ENCODE measurements at regions of chr1 and their contacts with region 1.

Region 1: GRCh38 chr1:211698161-211699026 is 23.0 kb upstream of the NEK2 start:
- DNase-seq: peak; percentile 55
- ATAC-seq: peak; percentile 78
- H3K4me3 ChIP-seq: 0 out of 2 replicates have a peak overlapping the region, but pooled peaks have one; percentile 31
- H3K27ac ChIP-seq: no peak overlapping the region
- H3K4me1 ChIP-seq: peaks cover 40% of the 10 kb centered on the region
- H3K27me3 ChIP-seq: no peaks in the 10 kb centered on the region
- CTCF ChIP-seq: peak; percentile 98 to 99 (median 99); a peak in 5 of 6 replicates
- EP300 ChIP-seq: no peak
- POLR2A ChIP-seq: no peak
- RAD21 ChIP-seq: peak; percentile 93

Region 2: GRCh38 chr1:211484755-211485479 is 213.5 kb before region 1 on chr1:
- CTCF ChIA-PET with region 1: no interaction called
- POLR2A ChIA-PET with region 1: no interaction called
- RAD21 ChIA-PET with region 1: no interaction called
- SMC1A ChIA-PET with region 1: no interaction called
- in situ Hi-C with region 1: no loop called
- intact Hi-C with region 1: no loop called
- DNase-seq: no peak
- ATAC-seq: no peak; the same call in 2 of the 3 replicates
- H3K4me3 ChIP-seq: no peak overlapping the region
- H3K27ac ChIP-seq: no peak overlapping the region
- H3K4me1 ChIP-seq: no peaks in the 10 kb centered on the region
- H3K27me3 ChIP-seq: peaks cover 2 to 3% of the 10 kb centered on the region in 2 experiments; a peak in 1 of 4 replicates
- CTCF ChIP-seq: no peak
- EP300 ChIP-seq: no peak
- POLR2A ChIP-seq: no peak
- RAD21 ChIP-seq: no peak

Region 3: DNA sequence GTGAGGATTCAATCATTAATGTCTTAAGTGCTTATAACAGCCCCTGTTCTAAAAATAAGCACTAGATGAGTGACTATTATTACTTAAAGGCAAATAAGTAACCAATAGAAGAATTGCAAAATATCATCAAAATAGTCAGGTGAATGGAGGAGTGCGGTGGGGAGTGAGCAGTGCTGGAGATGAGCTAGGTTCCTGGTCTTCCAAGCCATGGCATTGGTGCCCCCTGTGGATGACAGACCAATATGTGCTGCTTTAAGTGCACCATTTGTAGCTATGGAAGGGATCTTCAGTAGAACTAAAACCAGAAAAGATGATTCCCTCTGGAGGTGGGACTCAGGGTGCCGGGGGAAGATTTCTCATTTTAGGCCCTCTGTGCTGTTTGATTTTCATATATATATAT is 73.4 kb before region 1 on chr1:
- CTCF ChIA-PET with region 1: no interaction called
- POLR2A ChIA-PET with region 1: no interaction called
- RAD21 ChIA-PET with region 1: no interaction called
- SMC1A ChIA-PET with region 1: no interaction called
- in situ Hi-C with region 1: no loop called
- intact Hi-C with region 1: no loop called
- DNase-seq: no peak
- ATAC-seq: peak; percentile 85
- H3K4me3 ChIP-seq: no peak overlapping the region
- H3K27ac ChIP-seq: no peak overlapping the region
- H3K4me1 ChIP-seq: no peaks in the 10 kb centered on the region
- H3K27me3 ChIP-seq: no peaks in the 10 kb centered on the region
- CTCF ChIP-seq: peak; percentile 30 to 60 (median 35); a peak in 4 of 6 replicates
- EP300 ChIP-seq: no peak
- POLR2A ChIP-seq: no peak
- RAD21 ChIP-seq: peak; percentile 42

Region 4: DNA sequence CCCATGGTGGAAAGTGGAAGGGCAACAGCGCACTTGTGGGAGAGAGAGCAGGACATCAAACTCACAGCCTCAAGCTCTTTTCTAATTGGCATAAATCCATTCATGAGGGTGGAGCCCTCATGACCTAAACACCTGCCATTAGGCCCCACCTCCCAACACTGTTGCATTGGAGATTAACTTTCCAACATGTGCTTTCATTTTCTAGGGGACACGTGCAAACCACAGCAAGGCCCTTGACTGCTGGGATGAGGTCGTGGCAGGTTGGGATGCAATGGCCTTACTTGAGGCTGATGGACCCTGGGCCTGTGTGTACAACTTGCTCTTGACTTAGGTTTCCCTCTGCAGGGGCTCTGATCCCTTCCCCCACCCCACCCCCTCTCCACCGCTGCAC is 12.9 kb after region 1 on chr1:
- CTCF ChIA-PET with region 1: interaction called, 7 read pairs
- POLR2A ChIA-PET with region 1: interaction called, 6 read pairs
- RAD21 ChIA-PET with region 1: no interaction called
- SMC1A ChIA-PET with region 1: interaction called, 10 read pairs
- in situ Hi-C with region 1: no loop called
- intact Hi-C with region 1: no loop called
- DNase-seq: no peak
- ATAC-seq: no peak
- H3K4me3 ChIP-seq: no peak overlapping the region
- H3K27ac ChIP-seq: no peak overlapping the region
- H3K4me1 ChIP-seq: no peaks in the 10 kb centered on the region
- H3K27me3 ChIP-seq: no peaks in the 10 kb centered on the region
- CTCF ChIP-seq: no peak
- EP300 ChIP-seq: no peak
- POLR2A ChIP-seq: no peak
- RAD21 ChIP-seq: no peak

Region 5: DNA sequence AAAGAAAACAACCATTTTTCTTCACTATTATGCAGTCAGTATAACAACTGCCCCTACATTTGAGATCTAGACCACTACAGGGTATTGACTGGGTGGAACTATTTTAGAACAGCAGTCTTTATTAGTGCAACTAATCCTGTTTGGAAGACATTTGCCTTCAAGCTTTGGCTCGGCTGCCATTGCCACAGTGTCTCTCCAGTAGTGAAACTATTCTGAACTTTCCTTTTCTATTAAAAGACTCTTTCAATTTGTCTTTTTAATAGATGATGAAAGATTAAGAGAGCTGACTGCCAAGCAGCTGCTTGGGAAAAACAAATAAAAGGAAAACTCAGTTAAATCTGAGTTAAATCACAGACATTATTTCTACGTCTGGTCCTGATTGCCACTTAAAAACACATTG is 82.9 kb after region 1 on chr1:
- CTCF ChIA-PET with region 1: interaction called, 10 read pairs
- POLR2A ChIA-PET with region 1: no interaction called
- RAD21 ChIA-PET with region 1: interaction called, 14 read pairs
- SMC1A ChIA-PET with region 1: interaction called, 19 read pairs
- in situ Hi-C with region 1: no loop called
- intact Hi-C with region 1: no loop called
- DNase-seq: no peak
- ATAC-seq: peak; percentile 67
- H3K4me3 ChIP-seq: no peak overlapping the region
- H3K27ac ChIP-seq: peak overlapping the region; percentile 33; the same call in 1 of the 2 replicates
- H3K4me1 ChIP-seq: no peaks in the 10 kb centered on the region; the same call in none of the 2 replicates
- H3K27me3 ChIP-seq: no peaks in the 10 kb centered on the region
- CTCF ChIP-seq: no peak
- EP300 ChIP-seq: no peak
- POLR2A ChIP-seq: no peak
- RAD21 ChIP-seq: no peak

Region 6: DNA sequence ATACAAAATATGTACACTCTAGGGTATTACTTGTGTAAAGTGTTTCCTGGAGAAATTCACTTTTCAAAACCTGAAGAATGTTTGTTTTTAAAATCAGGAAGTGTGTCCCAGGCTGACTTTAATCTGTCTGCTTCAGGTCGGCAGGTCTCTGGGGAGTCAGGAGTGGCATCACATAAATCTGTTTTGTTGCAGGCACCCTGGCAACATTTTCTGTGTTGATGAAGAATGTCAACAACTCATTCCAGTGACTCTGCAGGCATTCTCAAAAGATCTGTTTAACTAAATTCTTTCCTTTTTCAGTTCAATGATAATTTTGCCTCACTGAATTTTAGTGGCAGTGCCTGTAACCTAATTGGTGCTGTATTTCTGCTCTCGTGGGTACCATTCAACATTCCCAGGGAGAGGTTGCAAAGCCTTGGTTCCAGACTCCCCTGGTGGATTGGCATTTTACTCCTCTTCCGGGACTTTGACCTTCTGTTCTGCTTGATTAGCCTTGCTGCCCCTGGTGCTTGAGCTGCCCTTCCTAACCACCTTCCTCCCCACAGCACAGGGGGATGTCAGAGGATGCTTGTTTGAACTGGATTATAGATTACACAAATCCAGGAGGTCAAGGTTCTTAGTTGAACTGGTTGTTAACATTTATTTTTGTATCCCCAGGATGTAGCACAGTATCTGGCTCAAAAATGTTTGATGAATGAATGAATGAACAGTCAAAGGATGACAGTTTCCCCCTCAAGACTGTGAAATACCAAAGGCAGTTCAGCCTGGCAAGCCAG is 187.5 kb after region 1 on chr1:
- CTCF ChIA-PET with region 1: interaction called, 3 read pairs
- POLR2A ChIA-PET with region 1: no interaction called
- RAD21 ChIA-PET with region 1: interaction called, 3 read pairs
- SMC1A ChIA-PET with region 1: interaction called, 12 read pairs
- in situ Hi-C with region 1: no loop called
- intact Hi-C with region 1: no loop called
- DNase-seq: no peak
- ATAC-seq: 0 out of 3 replicates have a peak, but pooled peaks have one; percentile 15
- H3K4me3 ChIP-seq: no peak overlapping the region
- H3K27ac ChIP-seq: no peak overlapping the region
- H3K4me1 ChIP-seq: peaks cover 10% of the 10 kb centered on the region; the same call in 1 of the 2 replicates
- H3K27me3 ChIP-seq: no peaks in the 10 kb centered on the region
- CTCF ChIP-seq: no peak
- EP300 ChIP-seq: no peak
- POLR2A ChIP-seq: no peak
- RAD21 ChIP-seq: no peak

Region 7: GRCh38 chr1:211991695-211992094 is 293.3 kb after region 1 on chr1:
- CTCF ChIA-PET with region 1: interaction called, 32 read pairs
- POLR2A ChIA-PET with region 1: interaction called, 38 read pairs
- RAD21 ChIA-PET with region 1: interaction called, 42 read pairs
- SMC1A ChIA-PET with region 1: interaction called, 53 read pairs
- in situ Hi-C with region 1: no loop called
- intact Hi-C with region 1: loop called (anchors 5 kb)
- DNase-seq: no peak
- ATAC-seq: no peak
- H3K4me3 ChIP-seq: no peak overlapping the region
- H3K27ac ChIP-seq: no peak overlapping the region
- H3K4me1 ChIP-seq: peaks cover 2% of the 10 kb centered on the region
- H3K27me3 ChIP-seq: no peaks in the 10 kb centered on the region
- CTCF ChIP-seq: no peak
- EP300 ChIP-seq: no peak
- POLR2A ChIP-seq: no peak
- RAD21 ChIP-seq: no peak

Region 8: GRCh38 chr1:212070720-212071302 is 372.4 kb after region 1 on chr1:
- CTCF ChIA-PET with region 1: interaction called, 8 read pairs
- POLR2A ChIA-PET with region 1: no interaction called
- RAD21 ChIA-PET with region 1: interaction called, 23 read pairs
- SMC1A ChIA-PET with region 1: interaction called, 5 read pairs
- in situ Hi-C with region 1: no loop called
- intact Hi-C with region 1: no loop called
- DNase-seq: no peak
- ATAC-seq: peak; percentile 63
- H3K4me3 ChIP-seq: no peak overlapping the region
- H3K27ac ChIP-seq: no peak overlapping the region
- H3K4me1 ChIP-seq: no peaks in the 10 kb centered on the region
- H3K27me3 ChIP-seq: no peaks in the 10 kb centered on the region
- CTCF ChIP-seq: peak; percentile 51 to 72 (median 54); a peak in 5 of 6 replicates
- EP300 ChIP-seq: no peak
- POLR2A ChIP-seq: no peak
- RAD21 ChIP-seq: peak; percentile 95